Mammary epithelial cell (primary cell): ENCODE measurements at regions of chr20 and their contacts with region 1.

Region 1: DNA sequence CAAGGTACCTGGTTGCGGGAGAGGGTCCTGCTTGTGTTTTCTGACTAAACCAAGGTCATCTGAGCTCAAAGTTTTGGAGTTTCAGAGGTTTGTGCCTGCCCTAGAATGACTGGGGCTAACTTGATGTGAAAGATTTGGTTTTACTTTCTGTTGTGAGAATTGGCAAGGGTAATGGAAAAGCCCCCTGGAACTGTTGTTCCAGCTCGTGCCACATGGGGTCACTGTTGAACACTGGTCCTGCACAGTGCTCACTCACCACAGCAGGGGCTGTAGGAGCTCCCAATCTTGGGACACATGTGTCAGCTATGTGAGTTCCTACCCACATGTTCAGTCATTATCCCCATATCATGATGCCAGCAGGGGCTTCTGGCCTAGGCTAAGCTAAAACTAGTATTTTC is 6.5 kb downstream of the TGM6 start:
- DNase-seq: no peak
- H3K4me3 ChIP-seq: no peak overlapping the region
- H3K27ac ChIP-seq: peak overlapping the region; percentile 57
- H3K4me1 ChIP-seq: peaks cover 38% of the 10 kb centered on the region
- H3K27me3 ChIP-seq: no peaks in the 10 kb centered on the region
- CTCF ChIP-seq: peak; percentile 62 to 76

Region 2: DNA sequence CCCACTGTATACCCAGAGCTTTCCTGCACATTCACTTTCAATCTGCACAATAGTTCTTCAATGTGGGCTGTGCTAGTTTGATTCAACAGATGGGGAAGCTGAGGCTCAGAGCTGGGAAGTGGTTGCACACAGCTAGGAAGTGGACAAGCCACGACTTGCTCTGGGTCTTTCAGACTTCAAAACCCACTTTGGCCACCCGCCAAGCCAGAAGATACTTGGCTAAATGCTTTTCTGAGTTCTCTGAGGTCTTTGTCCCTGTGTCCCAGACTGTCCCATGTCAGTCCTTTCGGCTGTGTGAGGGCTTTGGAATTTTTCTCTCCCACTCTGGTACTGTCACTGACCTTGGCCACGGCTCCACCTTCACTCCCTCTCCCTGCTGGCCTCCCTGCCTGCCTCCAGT is 403.9 kb before region 1 on chr20:
- CTCF ChIA-PET with region 1: no interaction called
- dilution Hi-C with region 1: no loop called
- in situ Hi-C with region 1: no loop called
- intact Hi-C with region 1: no loop called
- DNase-seq: no peak
- H3K4me3 ChIP-seq: no peak overlapping the region
- H3K27ac ChIP-seq: no peak overlapping the region
- H3K4me1 ChIP-seq: no peaks in the 10 kb centered on the region
- H3K27me3 ChIP-seq: no peaks in the 10 kb centered on the region
- CTCF ChIP-seq: no peak

Region 3: DNA sequence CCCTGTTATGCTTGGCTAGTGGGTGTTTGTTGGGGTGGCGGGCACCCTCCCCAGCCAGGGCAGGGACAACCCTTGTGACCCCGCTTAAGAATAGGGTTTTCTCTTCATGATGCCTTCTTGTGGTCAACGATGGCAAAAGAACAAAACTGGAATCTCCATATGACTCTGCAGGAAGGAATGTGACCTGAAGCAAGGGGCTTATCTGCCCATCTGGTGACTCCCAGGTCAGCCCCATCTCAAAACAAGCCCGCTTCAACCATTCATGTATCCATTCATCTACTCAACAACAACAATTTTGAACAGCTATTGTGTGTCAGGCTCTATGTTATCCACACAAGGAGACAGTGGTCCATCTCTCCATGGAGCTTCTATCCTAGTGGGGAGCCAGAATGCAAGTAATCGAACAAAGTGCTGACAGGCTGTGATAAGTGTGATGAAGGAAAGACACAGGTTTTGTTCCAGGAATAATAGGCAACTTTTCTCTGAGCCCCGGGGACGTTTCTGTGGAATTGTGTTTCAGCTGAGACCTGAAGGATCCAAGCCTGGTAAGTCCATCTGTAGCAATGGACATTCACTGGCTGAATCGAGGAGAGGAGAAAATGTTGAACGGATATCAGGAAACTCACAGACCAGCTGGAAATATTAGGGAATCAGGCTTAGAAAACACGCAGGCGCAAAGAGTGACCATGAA is 37.2 kb before region 1 on chr20:
- CTCF ChIA-PET with region 1: no interaction called
- dilution Hi-C with region 1: no loop called
- in situ Hi-C with region 1: no loop called
- intact Hi-C with region 1: loop called (anchors 1 kb)
- DNase-seq: peak; percentile 58
- H3K4me3 ChIP-seq: no peak overlapping the region
- H3K27ac ChIP-seq: no peak overlapping the region
- H3K4me1 ChIP-seq: peaks cover 9% of the 10 kb centered on the region
- H3K27me3 ChIP-seq: no peaks in the 10 kb centered on the region
- CTCF ChIP-seq: peak in 1 of 2 donors; percentile 1

Region 4: GRCh38 chr20:2402271-2402980 is 15.2 kb after region 1 on chr20:
- CTCF ChIA-PET with region 1: no interaction called
- dilution Hi-C with region 1: no loop called
- in situ Hi-C with region 1: no loop called
- intact Hi-C with region 1: loop called (anchors 2 kb)
- DNase-seq: peak; percentile 68
- H3K4me3 ChIP-seq: no peak overlapping the region
- H3K27ac ChIP-seq: no peak overlapping the region
- H3K4me1 ChIP-seq: no peaks in the 10 kb centered on the region
- H3K27me3 ChIP-seq: no peaks in the 10 kb centered on the region
- CTCF ChIP-seq: peak; percentile 51 to 61

Region 5: DNA sequence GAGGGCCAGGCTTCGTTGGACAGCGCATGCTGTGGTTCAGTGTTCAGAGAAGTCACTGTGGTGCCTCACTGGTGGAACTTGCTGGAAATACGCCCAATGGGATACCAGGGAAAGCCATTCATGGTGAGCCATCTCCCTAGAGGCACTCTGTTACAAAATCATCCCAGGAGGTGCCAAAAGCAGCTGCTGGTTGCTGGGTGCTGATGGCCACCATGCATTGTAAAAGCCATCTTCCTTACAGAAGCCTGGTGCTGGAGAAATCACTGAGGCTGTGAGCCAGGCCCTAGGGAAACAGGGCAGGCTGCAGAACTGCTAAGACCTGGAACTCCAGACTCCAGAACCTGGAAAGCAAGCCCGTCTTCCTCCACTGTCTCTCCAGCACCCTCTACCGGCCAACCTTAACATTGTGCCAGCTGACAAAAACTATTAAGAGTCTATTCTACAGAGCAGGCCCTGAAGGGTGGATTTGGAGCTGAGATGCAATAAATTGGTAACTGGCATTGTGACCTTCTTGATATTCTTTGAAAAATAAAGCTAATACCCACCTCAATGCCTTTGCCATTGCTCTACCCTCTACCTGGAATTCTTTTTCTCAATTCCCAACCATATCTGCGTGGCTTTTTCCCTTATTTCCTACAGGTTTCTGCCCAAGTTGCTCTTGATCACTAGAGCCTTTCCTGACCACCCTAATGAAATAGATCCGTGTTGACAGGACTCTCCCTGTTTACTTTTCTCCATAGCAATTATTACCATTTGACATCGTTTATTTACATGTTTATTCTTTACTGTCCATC is 65.0 kb after region 1 on chr20:
- CTCF ChIA-PET with region 1: interaction called, 6 read pairs
- dilution Hi-C with region 1: no loop called
- in situ Hi-C with region 1: no loop called
- intact Hi-C with region 1: loop called (anchors 1 kb)
- DNase-seq: peak; percentile 70
- H3K4me3 ChIP-seq: no peak overlapping the region
- H3K27ac ChIP-seq: no peak overlapping the region
- H3K4me1 ChIP-seq: peaks cover 11% of the 10 kb centered on the region
- H3K27me3 ChIP-seq: no peaks in the 10 kb centered on the region
- CTCF ChIP-seq: peak; percentile 90 to 92

Region 6: GRCh38 chr20:2879146-2879545 is 492.0 kb after region 1 on chr20:
- CTCF ChIA-PET with region 1: no interaction called
- dilution Hi-C with region 1: no loop called
- in situ Hi-C with region 1: no loop called
- intact Hi-C with region 1: no loop called
- DNase-seq: peak; percentile 30
- H3K4me3 ChIP-seq: no peak overlapping the region
- H3K27ac ChIP-seq: no peak overlapping the region
- H3K4me1 ChIP-seq: peaks cover 5% of the 10 kb centered on the region
- H3K27me3 ChIP-seq: no peaks in the 10 kb centered on the region
- CTCF ChIP-seq: no peak